Right ventricle myocardium inferior (tissue), 1 donor: ENCODE measurements at regions of chr2 and their contacts with region 1.

Region 1: DNA sequence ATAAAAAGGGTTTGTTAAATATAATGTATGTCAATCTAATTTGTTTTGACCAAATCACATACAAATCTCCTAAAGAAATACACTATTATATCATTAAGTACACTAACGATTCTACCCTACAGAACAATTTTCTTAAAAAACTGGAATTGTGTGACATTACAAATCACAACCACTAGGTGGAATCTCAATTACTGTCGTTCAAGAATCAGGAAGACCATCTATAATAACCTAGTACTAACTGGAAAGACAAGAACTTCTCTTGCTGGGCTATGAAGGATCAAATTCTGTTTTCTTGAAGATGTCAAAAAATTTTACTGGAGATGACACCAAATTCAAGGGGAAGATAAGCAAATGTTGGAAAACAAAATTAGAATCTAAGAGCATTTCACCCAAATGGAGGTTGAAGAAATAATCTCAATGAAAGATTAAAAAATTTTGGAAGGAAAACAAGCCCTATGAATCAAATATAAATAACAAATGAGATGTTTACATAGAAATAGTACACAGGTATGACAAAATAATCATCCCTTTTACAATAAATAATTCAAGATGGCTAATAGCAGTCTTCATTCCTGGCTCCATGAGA is 110.9 kb downstream of the STK39 start:
- DNase-seq: no peak
- ATAC-seq: no peak

Region 2: GRCh38 chr2:168097431-168097830 is 39.1 kb before region 1 on chr2:
- intact Hi-C with region 1: no loop called
- DNase-seq: no peak
- ATAC-seq: no peak

Region 3: GRCh38 chr2:168174756-168175155 is 38.3 kb after region 1 on chr2:
- intact Hi-C with region 1: no loop called
- DNase-seq: no peak
- ATAC-seq: no peak

Region 4: DNA sequence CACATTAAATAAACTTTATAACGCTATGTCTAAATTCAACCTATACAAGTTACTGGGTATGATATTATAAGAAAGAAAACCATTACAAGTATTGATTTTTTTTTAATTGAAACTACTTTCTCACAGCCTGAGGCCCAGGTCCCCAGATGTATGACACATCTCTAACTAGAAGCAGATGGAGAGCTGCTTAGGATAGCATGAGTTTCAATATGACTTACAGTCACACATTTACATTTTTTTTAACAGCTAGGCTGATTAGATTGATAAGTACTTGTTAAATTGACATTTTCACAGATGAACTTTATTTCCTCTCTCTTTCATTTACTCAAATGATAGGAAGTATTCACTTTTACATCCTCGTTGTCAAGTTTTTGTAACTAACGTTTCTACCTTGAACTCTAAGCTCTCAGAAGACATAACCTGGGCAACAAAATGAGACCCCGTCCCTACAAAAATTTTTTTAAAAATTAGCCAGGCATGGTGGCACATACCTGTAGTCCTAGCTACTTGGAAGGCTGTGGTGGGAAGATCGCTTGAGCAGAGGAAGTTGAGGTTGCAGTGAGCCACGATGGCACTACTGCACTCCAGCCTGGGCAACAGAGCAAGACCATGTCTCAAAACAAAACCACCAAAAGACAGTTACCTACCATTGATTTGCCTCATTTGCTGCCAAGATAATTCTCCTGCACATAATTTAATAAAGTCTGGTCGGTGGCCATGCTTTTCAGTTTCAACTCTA is 58.5 kb after region 1 on chr2:
- intact Hi-C with region 1: no loop called
- DNase-seq: no peak
- ATAC-seq: no peak

Region 5: GRCh38 chr2:168323529-168324021 is 187.1 kb after region 1 on chr2:
- intact Hi-C with region 1: loop called (anchors 5 kb)
- DNase-seq: no peak
- ATAC-seq: no peak

Region 6: DNA sequence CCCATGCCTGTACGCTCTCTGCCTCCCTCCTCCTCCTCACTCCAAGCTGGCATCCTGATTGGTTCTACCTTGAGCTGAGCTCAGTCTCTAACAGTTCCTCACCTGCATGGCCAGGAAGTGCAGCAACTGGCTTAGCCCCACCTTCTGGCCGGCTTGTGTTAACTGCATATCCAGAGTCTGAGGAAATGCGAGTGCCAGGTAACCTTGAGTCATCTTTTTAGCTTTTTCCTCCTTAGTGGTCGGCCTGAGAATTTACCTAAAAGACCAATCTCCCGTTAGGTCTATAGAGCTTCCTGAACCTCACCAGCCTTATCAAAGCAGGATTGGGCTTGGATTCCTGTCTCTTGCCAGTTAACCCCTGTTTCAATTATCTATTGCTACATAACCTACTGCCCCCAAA is 200.4 kb after region 1 on chr2:
- intact Hi-C with region 1: loop called (anchors 5 kb)
- DNase-seq: no peak
- ATAC-seq: no peak